A549 (cell line): ENCODE measurements at regions of chr11 and their contacts with region 1.

Region 1: GRCh38 chr11:9075556-9075955 is 15.8 kb downstream of the SCUBE2 start:
- DNase-seq: no peak
- ATAC-seq: no peak
- H3K4me3 ChIP-seq: no peak overlapping the region
- H3K27ac ChIP-seq: no peak overlapping the region
- H3K4me1 ChIP-seq: no peaks in the 10 kb centered on the region
- CTCF ChIP-seq: no peak
- EP300 ChIP-seq: no peak
- POLR2A ChIP-seq: no peak
- RAD21 ChIP-seq: no peak

Region 2: DNA sequence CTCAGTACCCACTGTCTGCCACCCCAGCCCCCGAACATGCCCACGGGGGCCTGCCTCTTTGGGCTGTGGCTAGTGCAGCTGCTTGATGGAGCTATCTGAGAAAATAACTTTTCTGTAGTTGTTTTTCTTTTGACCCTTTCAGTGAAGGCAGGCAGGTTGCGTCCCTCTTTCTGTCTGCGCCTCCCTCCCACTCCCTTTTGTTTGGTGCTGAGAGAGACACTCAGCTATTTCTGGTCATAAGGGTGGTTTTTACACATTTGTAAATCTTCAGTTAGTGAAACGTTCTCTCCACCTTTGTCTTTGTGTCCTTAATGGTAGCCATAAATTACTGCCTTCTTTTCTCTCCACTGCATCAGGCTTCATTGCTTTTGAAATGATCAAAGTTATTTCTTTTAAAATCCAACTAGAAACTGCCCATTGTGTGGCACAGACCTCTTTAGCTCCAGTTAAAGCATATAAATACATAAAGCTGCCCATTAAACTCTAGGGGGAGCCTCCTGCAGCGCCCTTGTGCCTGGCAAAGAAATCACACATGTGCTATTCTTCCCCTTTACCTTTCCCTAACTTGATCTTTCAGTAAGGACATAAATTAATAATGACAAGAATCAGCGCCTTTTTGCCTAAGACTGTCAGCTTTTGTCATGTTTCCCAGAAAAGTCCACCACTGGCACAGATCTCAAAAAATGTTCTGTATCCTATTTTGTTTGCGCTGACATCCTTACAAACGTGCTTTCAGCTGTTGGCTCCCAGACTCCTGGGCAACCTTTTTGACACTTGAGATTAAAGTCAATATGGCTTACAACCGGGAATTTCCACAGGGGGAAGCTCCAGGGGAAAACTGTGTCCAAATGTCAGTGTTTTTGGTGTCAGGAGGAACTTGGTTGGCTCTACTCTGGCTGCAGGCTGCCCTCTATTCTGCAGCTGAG is 17.6 kb after region 1 on chr11:
- CTCF ChIA-PET with region 1: interaction called, 13 read pairs
- POLR2A ChIA-PET with region 1: no interaction called
- DNase-seq: peak in 1 of 2 experiments; percentile 18
- ATAC-seq: peak; percentile 48 to 71; a peak in 3 of 6 replicates
- H3K4me3 ChIP-seq: no peak overlapping the region
- H3K27ac ChIP-seq: no peak overlapping the region
- H3K4me1 ChIP-seq: 0 out of 3 replicates have a peak, but pooled peaks cover 3% of the 10 kb centered on the region
- CTCF ChIP-seq: peak; percentile 46
- EP300 ChIP-seq: no peak
- POLR2A ChIP-seq: no peak
- RAD21 ChIP-seq: peak in 1 of 2 experiments; percentile 31; a peak in 1 of 5 replicates